Endothelial cell of umbilical vein (primary cell): ENCODE measurements at regions of chr11 and their contacts with region 1.

Region 1: DNA sequence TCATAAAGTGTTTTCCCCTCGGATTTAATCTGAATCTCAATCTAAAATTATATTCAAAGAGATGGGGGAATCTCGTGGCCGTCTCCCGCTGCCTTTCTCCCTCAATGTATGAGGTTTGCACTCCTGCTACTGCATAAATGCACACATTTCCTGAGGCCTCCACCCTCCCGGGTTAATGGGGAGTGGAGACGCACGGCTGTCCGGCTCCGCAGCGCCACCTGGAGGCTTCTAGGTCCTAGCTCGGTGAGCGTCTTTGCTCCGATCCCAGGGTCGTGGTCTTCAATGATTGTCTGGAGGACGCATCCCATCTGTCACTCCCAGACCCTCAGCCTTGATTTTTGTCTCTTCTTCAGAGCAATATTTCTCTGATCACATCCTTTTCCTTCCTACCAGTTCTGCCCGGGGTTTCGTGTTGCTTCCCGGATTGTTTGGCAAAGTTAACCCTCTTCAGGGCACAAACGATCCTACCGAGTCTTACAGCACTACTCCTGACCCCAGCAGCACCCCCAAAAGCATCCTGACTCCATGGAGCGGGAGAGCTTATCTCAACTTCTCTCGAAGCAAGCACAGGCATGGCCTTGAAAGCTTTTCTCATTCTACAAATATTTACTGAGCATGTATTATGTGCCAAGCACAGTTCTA is at the start of gene LMO1:
- DNase-seq: peak; percentile 69
- H3K4me3 ChIP-seq: peak within 1 kb of the TSS in 1 of 3 experiments; percentile 11
- H3K27ac ChIP-seq: no peak within 1 kb of the TSS
- H3K4me1 ChIP-seq: peaks cover 4% of the 10 kb centered on the region
- H3K27me3 ChIP-seq: peaks cover 52 to 53% of the 10 kb centered on the region in 2 experiments
- CTCF ChIP-seq: peak; percentile 88 to 92
- POLR2A ChIP-seq: no peak
- total RNA-seq, gene LMO1: not detected in 2 replicates

Region 2: DNA sequence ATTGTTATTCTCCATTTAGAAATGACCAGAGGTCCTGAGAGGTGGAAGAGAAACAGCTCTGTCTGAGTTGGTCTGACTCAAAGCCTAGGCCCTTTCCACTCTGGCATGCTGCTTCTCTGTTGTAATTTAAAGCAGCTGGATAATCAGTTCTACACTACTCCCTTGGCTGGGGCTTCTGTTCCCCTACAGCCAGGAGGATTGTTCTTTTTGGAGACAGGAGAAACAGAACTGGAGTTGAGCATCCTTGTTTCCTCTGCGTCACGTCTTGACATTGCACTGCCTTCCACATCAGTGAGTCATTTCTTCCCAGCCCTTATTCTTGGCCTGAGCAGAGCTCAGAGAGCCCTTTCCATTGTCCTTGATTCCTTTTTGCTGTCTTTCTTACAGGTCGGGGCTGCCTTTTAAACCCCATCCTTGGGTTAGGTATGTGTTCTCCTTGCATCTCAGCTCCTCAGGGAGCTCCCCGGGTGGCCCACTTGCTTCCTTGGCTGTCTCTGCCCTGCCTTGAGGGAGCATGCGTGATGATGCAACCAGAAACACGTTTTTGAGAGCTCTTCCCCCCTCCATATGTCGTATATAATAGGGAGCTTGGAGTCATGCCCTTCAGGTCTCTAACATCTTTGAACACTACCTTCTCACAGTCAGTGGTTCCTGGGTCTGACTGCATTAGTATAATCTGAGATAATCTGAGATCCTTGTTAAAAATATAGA is 626.3 kb before region 1 on chr11:
- CTCF ChIA-PET with region 1: no interaction called
- POLR2A ChIA-PET with region 1: no interaction called
- dilution Hi-C with region 1: no loop called
- intact Hi-C with region 1: no loop called
- DNase-seq: peak; percentile 62
- H3K4me3 ChIP-seq: no peak overlapping the region
- H3K27ac ChIP-seq: peak overlapping the region; percentile 19
- H3K4me1 ChIP-seq: peaks cover 10% of the 10 kb centered on the region
- H3K27me3 ChIP-seq: no peaks in the 10 kb centered on the region
- CTCF ChIP-seq: no peak
- POLR2A ChIP-seq: no peak

Region 3: DNA sequence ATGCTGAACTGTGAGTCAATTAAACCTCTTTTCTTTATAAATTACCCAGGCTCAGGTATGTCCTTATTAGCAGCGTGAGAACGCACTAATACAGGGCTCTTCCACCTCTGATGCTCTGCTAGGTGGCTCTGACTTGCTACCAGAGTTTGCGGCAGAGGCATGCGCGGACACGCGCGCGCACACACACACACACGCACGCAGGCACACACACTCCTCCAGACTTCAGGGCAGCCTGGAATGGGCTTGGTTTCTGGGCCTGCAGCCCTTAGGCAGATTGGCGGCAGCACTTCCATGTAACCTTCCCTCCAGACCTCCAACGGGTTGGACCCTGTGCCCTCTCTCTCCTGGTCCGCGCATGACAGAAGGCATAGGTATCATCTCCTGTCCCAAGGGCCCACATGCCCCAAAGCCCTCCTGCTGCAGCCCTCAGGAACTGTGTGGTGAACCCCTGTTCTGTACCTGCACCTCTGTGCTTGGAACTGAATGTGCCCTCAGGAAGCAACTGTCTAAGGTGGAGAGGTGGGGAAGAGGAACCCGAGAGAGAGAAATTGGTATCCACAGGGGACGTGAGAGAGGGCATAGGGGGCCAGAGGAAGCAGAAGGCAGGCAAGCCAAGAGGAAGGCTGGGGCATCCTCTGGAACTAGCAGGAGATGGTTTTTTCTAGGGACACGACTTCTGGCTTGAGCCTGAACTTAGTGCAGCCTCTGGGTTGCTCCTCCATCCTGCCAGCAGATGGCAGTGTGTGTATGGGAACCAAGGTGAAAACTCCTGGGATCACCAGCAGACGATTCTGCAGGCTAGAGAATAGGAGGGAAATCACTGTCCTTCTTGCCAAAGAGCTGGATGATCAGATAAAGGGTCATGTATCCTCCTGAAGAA is 71.6 kb before region 1 on chr11:
- CTCF ChIA-PET with region 1: interaction called, 24 read pairs
- POLR2A ChIA-PET with region 1: no interaction called
- dilution Hi-C with region 1: no loop called
- intact Hi-C with region 1: loop called (anchors 1 kb)
- DNase-seq: peak; percentile 60
- H3K4me3 ChIP-seq: no peak overlapping the region
- H3K27ac ChIP-seq: no peak overlapping the region
- H3K4me1 ChIP-seq: no peaks in the 10 kb centered on the region
- H3K27me3 ChIP-seq: peaks cover 2 to 11% of the 10 kb centered on the region in 2 experiments
- CTCF ChIP-seq: peak; percentile 76 to 89
- POLR2A ChIP-seq: no peak

Region 4: DNA sequence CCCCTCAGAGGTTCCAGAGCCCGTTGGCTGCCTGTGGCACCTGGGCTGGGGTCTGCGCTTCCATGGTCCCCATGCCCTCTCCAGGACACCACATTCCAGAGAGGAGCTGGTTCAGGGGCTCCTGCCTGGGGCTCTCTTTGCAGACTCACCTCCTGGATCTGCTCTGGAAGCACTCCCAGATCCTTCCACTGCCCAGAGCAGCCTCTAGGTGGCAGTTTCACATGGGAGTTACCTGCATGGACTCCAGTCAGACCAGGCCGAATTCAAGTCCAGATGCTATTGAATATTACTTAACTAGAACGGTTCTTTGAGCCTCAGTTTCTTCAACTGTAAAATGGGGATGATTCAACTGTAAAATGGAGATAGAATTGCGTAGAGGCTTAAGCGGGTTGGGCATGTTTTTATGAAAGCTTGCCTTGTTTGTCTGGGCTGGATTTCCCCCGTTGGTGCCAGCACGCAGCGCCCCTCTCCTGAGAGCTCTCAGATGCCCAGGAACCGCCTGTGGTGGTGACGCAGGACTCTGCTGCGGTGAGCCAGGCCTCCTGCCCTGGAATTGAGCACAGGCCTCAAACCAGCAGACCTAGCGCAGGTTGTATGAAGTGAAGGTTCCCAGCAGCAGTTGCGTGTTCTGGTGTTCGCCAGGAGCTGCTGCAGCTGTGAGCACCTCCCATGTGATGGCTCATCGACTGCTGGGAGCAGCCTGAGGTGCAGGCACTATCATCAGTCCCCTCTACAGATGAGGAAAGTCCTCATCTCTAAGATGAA is 44.5 kb before region 1 on chr11:
- CTCF ChIA-PET with region 1: interaction called, 49 read pairs
- POLR2A ChIA-PET with region 1: no interaction called
- dilution Hi-C with region 1: no loop called
- intact Hi-C with region 1: no loop called
- DNase-seq: peak; percentile 47
- H3K4me3 ChIP-seq: no peak overlapping the region
- H3K27ac ChIP-seq: no peak overlapping the region
- H3K4me1 ChIP-seq: no peaks in the 10 kb centered on the region
- H3K27me3 ChIP-seq: peaks cover 0 to 6% of the 10 kb centered on the region in 2 experiments
- CTCF ChIP-seq: peak; percentile 63 to 76
- POLR2A ChIP-seq: no peak

Region 5: DNA sequence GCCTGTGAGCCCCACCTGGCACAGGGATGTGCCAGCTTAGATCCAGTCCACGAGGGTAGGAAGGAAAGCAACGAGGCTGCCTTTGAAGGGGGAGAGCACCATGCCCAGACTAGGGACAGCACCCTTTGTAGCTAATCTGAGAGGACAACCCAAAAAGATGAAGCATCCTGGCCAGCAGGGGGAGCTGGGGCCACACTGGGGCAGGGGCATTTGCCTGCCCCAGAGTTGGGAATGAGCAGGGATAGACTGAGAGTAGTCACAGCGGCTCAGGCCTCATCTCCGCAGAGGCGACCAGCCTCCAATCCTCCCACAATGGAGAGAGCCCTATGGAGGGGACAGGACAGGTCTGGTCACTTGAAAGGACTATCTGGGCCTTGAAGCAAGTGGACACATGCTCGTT is 16.6 kb before region 1 on chr11:
- CTCF ChIA-PET with region 1: interaction called, 46 read pairs
- POLR2A ChIA-PET with region 1: no interaction called
- dilution Hi-C with region 1: no loop called
- intact Hi-C with region 1: loop called (anchors 1 kb)
- DNase-seq: no peak
- H3K4me3 ChIP-seq: no peak overlapping the region
- H3K27ac ChIP-seq: no peak overlapping the region
- H3K4me1 ChIP-seq: peaks cover 3% of the 10 kb centered on the region
- H3K27me3 ChIP-seq: peaks cover 3% of the 10 kb centered on the region in 2 experiments
- CTCF ChIP-seq: peak; percentile 48 to 51
- POLR2A ChIP-seq: no peak

Region 6: DNA sequence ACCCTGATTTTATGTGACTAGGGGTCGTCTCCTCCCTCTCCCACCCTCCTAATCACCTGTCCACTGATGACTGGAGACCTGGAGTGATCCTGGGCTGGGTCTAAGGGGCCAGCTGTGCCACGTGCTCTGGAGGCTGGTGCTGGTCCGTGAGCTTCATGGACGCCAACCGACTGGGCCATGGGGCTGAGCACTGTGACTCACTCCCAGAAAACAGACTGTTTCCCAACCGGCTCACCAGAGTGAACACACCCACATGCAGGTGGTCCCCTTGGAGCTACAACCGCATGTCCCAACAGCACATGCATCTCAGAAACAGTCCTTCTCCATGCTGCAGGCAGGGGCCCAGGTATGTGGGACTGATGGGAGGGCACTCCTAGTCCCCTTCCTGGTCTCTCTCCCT is 13.8 kb after region 1 on chr11:
- CTCF ChIA-PET with region 1: interaction called, 26 read pairs
- POLR2A ChIA-PET with region 1: no interaction called
- dilution Hi-C with region 1: no loop called
- intact Hi-C with region 1: no loop called
- DNase-seq: no peak
- H3K4me3 ChIP-seq: no peak overlapping the region
- H3K27ac ChIP-seq: no peak overlapping the region
- H3K4me1 ChIP-seq: peaks cover 9% of the 10 kb centered on the region
- H3K27me3 ChIP-seq: peaks cover 6 to 30% of the 10 kb centered on the region in 2 experiments
- CTCF ChIP-seq: no peak
- POLR2A ChIP-seq: no peak

Region 7: GRCh38 chr11:8328848-8329330 is 65.0 kb after region 1 on chr11:
- CTCF ChIA-PET with region 1: interaction called, 3 read pairs
- POLR2A ChIA-PET with region 1: no interaction called
- dilution Hi-C with region 1: no loop called
- intact Hi-C with region 1: loop called (anchors 2 kb)
- DNase-seq: peak; percentile 67
- H3K4me3 ChIP-seq: no peak overlapping the region
- H3K27ac ChIP-seq: no peak overlapping the region
- H3K4me1 ChIP-seq: peaks cover 3% of the 10 kb centered on the region
- H3K27me3 ChIP-seq: no peaks in the 10 kb centered on the region
- CTCF ChIP-seq: peak; percentile 84 to 94
- POLR2A ChIP-seq: no peak

Region 8: GRCh38 chr11:8899119-8899753 is 635.3 kb after region 1 on chr11:
- CTCF ChIA-PET with region 1: no interaction called
- POLR2A ChIA-PET with region 1: no interaction called
- dilution Hi-C with region 1: no loop called
- intact Hi-C with region 1: no loop called
- DNase-seq: no peak
- H3K4me3 ChIP-seq: no peak overlapping the region
- H3K27ac ChIP-seq: no peak overlapping the region
- H3K4me1 ChIP-seq: no peaks in the 10 kb centered on the region
- H3K27me3 ChIP-seq: no peaks in the 10 kb centered on the region
- CTCF ChIP-seq: no peak
- POLR2A ChIP-seq: no peak